ENCODE measurements at regions of chr7 and their contacts with region 1.

Region 1: GRCh38 chr7:95199779-95200558 is 124.4 kb downstream of the PON1 start:
- DNase-seq: peak; percentile 32 to 88 (median 68)

Region 2: DNA sequence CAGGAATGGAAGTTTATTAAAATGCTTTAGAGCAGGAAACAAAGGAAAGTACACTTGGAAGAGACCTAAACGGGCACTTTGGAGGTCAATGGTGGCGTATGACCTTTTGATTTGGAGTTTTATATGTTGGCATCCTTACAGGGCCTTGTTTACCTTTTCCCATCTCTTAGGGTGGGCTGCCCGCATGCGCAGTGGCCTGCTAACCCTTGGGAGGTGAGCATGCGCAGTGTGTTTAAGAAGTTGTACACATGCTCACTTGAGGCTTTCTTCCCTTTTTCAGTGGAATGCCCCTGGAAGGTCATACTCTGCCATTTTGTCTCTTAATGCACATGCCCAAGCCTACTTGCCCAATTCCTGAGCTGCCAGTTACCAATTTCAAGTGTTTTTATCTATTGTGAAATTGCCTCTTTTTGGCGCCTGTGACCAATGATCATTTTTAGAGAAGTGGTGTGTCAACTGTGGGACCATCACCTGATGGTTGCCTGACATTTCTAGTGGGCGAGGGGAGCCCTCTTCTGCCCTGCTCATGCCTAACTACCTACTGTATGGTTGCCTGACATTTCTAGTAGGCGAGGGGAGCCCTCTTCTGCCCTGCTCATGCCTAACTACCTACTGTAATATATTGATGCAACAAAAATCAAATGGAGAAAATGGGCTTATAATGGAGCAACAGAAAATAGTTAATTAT is 154.6 kb before region 1 on chr7:
- intact Hi-C with region 1: loop called (anchors 10 kb)
- DNase-seq: peak in 40 of 42 donors; percentile 10 to 82 (median 58)

Region 3: DNA sequence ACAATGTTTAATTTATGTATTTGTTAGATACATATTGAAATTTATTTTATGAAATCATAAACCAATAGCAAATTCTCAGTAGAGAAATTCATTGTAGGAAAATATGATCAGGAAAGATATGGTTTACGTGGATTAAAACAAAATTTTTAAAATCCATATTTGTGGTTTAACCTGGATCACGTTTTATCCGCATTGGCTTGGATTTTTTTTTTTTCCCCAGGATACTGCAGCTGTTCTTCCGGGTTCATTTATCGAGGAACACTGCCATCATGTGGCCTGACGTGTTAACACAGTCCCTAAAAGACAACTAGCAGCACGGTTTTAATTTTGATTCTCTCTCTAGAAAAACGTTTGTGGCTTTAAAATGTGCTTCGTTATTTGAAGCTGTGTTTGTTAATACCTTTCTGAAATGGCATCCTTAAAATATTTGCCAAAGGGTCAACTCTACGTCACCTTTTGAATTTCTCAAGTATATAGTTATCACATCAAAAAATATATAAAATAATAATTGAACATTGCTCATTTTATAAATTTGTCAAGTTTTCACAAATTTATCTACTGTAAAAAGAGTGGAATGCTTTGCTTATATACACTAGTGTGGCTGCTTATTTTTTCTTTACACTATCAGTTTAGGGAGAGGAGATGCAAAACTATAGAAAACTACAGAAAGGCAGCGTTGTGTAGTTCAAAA is 277.1 kb after region 1 on chr7:
- intact Hi-C with region 1: loop called (anchors 10 kb)
- DNase-seq: peak; percentile 30 to 90 (median 75)